Dorsolateral prefrontal cortex (tissue), 120 donors: ENCODE measurements at regions of chr16 and their contacts with region 1.

Region 1: GRCh38 chr16:57091975-57092785 is at the start of gene CPNE2:
- DNase-seq: peak in 9 of 10 donors; percentile 35 to 84 (median 66)
- H3K4me3 ChIP-seq: peak within 1 kb of the TSS; percentile 63 to 95 (median 83)
- H3K27ac ChIP-seq: peak within 1 kb of the TSS; percentile 73 to 100 (median 97)
- H3K27me3 ChIP-seq: no peaks in the 10 kb centered on the region
- CTCF ChIP-seq: peak in 11 of 56 donors; percentile 7 to 34 (median 21)
- total RNA-seq, gene CPNE2: 18.1 to 151 (median 44.9) TPM

Region 2: DNA sequence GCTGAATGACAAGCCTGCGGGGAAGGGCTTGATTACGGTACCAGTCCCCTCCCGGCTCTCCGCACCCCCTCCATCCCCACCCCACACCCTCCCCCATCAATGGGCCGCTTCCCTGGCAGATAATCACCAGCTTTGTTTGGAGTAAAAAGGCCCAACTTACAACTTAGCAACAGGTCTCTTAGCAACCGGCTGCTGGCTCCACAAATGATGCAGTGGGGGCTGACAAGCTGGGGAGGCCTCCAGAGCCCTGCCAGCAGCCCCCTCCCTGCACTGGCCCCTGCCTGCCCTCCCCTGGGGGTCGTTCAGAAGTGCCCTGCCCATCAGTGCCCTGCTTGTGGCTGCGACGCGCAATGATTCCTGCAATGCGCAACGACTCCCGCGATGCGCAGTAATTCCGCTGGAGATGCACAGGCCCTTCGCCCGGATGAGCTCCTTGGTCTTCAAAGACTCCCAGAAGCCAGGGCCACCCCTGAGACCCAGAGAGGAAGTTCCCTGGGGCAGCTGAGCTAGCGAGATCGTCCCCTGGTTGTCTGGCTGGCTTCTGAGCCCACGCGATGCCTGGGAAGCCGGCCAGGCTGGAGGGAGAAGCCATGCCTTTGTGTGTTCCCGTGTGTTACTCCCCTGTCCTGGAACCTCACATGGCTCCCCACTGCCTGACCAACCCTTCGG is 23.5 kb after region 1 on chr16:
- intact Hi-C with region 1: loop called in 1 of 2 experiments (anchors 1 kb)
- DNase-seq: peak; percentile 53 to 90 (median 86)
- H3K4me3 ChIP-seq: peak overlapping the region in 55 of 59 donors; percentile 12 to 58 (median 37)
- H3K27ac ChIP-seq: peak overlapping the region; percentile 88 to 100 (median 98)
- H3K27me3 ChIP-seq: no peaks in the 10 kb centered on the region
- CTCF ChIP-seq: peak in 10 of 56 donors; percentile 7 to 36 (median 12)

Region 3: GRCh38 chr16:57141822-57142631 is 49.8 kb after region 1 on chr16:
- intact Hi-C with region 1: loop called (anchors 2 to 10 kb)
- DNase-seq: peak in 3 of 10 donors; percentile 25 to 43 (median 42)
- H3K4me3 ChIP-seq: peak overlapping the region in 1 of 59 donors; percentile 18
- H3K27ac ChIP-seq: peak overlapping the region; percentile 72 to 100 (median 96)
- H3K27me3 ChIP-seq: no peaks in the 10 kb centered on the region
- CTCF ChIP-seq: no peak

Region 4: GRCh38 chr16:57147381-57148221 is 55.4 kb after region 1 on chr16:
- intact Hi-C with region 1: loop called (anchors 2 to 10 kb)
- DNase-seq: peak in 3 of 10 donors; percentile 34 to 66 (median 42)
- H3K4me3 ChIP-seq: peak overlapping the region in 1 of 59 donors; percentile 3
- H3K27ac ChIP-seq: peak overlapping the region in 58 of 59 donors; percentile 19 to 100 (median 95)
- H3K27me3 ChIP-seq: no peaks in the 10 kb centered on the region
- CTCF ChIP-seq: no peak

Region 5: DNA sequence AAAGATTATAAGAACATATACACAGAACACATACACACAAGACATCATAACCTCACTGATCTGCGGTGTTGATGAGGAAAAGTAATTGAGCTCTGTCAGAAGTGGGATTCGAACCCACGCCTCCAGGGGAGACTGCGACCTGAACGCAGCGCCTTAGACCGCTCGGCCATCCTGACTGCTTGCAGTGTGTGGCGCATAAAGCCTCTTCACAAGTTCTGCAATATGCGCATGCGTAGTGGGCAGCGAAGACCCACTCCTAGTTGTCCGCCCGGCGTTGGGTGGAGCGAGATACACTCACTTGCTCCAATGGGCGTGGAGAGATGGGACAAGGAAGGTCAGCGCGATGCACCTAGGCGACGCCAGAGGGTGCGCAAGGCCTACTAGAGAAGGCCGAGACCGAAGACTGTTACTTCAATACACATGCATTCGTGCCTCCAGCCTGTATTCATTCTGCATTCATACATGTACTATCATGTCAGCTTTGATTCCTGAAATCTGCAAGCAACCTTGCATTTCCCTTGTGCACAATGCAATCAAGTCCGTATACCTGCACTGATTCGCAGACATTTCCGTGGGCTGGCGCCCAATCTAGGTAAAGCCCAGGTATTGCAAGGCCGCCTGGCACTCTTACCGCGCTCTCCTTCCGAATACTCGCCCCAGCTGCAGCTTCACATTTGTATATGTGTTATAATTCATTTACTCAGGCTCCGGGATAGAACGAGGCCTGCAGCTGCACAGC is 208.4 kb after region 1 on chr16:
- intact Hi-C with region 1: loop called in 1 of 2 experiments (anchors 5 kb)
- DNase-seq: peak; percentile 97 to 100 (median 99)
- H3K4me3 ChIP-seq: peak overlapping the region; percentile 29 to 73 (median 60)
- H3K27ac ChIP-seq: peak overlapping the region; percentile 81 to 99 (median 95)
- H3K27me3 ChIP-seq: no peaks in the 10 kb centered on the region
- CTCF ChIP-seq: peak; percentile 89 to 100 (median 98)